ENCODE measurements at regions of chr9 and their contacts with region 1.

Region 1: DNA sequence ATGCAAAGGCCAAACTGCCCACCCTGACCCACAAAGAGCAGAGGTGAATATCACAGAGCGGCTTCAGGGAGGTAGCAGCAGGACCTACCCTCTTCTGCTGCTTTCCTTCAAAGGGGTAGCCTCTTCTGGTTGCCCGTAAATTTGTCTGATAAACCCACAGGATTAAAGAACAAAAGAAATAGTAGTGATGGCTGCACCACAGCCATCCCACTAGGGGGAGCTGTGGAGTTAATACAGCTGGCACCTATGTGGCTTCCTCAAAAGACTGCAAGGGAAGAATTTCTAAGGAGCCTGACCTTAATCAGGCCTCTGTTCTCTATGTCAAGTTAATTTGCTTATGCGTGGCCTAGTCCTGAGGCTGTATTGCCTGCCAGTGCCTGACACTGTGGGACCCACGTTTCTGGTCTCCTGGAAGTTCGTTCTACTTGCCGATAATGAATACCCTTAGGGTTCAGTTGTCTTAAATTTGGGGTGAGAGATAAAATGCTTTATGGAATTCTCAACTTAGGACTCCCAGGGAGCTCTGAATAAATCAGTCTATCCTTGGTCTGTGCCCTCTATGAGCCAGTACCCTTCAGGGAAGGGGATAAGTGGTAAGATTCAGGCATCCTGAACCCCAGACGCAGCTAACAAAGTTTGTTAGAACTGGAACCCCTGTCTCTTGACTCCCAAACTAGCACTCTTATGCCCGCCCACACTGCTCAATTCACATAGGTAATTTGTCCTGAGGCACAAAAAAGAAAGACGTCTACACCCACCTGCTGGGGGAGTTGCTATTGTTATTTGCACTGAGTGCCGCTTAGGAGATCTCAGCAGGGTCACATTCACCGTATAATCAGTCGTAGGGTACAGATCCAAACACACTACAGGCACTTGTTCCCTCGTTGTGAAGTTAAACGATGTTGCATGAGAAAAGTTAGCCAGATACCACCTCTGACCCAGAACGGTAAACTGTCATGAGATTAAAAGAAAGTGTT is 77.1 kb downstream of the SUSD1 start:
- DNase-seq: peak; percentile 36 to 53
- H3K4me3 ChIP-seq: no peak overlapping the region
- H3K27ac ChIP-seq: no peak overlapping the region
- H3K4me1 ChIP-seq: no peaks in the 10 kb centered on the region
- H3K27me3 ChIP-seq: no peaks in the 10 kb centered on the region
- CTCF ChIP-seq: peak; percentile 69 to 89 (median 81)
- POLR2A ChIP-seq: no peak

Region 2: DNA sequence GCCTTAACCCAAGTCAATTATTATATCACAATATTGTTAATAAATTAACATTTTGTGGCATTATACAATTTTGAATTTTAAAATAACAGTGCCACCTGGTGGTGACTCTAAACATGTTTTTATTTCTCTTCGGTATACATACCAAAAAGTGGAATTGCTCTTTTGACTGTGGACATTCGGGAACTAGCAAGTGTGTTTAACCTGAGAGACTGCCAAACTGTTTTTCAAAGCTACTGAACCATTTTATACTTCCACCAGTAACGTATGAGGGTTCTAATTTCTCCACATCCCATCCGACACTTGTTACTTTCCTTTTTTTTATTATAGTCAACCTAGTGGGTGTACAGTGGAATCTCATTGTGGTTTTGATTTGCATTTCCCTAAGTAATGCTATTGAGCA is 263.6 kb after region 1 on chr9:
- intact Hi-C with region 1: loop called (anchors 5 kb)
- DNase-seq: no peak
- H3K4me3 ChIP-seq: no peak overlapping the region
- H3K27ac ChIP-seq: no peak overlapping the region
- H3K4me1 ChIP-seq: no peaks in the 10 kb centered on the region
- H3K27me3 ChIP-seq: no peaks in the 10 kb centered on the region
- CTCF ChIP-seq: peak; percentile 46 to 75 (median 58)
- POLR2A ChIP-seq: no peak

Region 3: GRCh38 chr9:114053246-114054005 is 1955.4 kb after region 1 on chr9:
- intact Hi-C with region 1: no loop called
- DNase-seq: no peak
- H3K4me3 ChIP-seq: no peak overlapping the region
- H3K27ac ChIP-seq: no peak overlapping the region
- H3K4me1 ChIP-seq: no peaks in the 10 kb centered on the region
- H3K27me3 ChIP-seq: no peaks in the 10 kb centered on the region
- CTCF ChIP-seq: no peak
- POLR2A ChIP-seq: no peak